ENCODE measurements at regions of chr16 and their contacts with region 1.

Region 1: GRCh38 chr16:56211435-56211981 is 20.2 kb downstream of the GNAO1 start:
- DNase-seq: peak; percentile 94
- H3K4me3 ChIP-seq: peak overlapping the region in 3 of 4 donors; percentile 0 to 28 (median 20)
- H3K27ac ChIP-seq: peak overlapping the region in 3 of 4 donors; percentile 72 to 86 (median 83)
- H3K4me1 ChIP-seq: peaks cover 0 to 73% (median 43%) of the 10 kb centered on the region in 4 donors
- H3K27me3 ChIP-seq: no peaks in the 10 kb centered on the region
- CTCF ChIP-seq: no peak
- EP300 ChIP-seq: peak; percentile 45 to 81 (median 78)
- POLR2A ChIP-seq: peak in 1 of 2 donors; percentile 26

Region 2: DNA sequence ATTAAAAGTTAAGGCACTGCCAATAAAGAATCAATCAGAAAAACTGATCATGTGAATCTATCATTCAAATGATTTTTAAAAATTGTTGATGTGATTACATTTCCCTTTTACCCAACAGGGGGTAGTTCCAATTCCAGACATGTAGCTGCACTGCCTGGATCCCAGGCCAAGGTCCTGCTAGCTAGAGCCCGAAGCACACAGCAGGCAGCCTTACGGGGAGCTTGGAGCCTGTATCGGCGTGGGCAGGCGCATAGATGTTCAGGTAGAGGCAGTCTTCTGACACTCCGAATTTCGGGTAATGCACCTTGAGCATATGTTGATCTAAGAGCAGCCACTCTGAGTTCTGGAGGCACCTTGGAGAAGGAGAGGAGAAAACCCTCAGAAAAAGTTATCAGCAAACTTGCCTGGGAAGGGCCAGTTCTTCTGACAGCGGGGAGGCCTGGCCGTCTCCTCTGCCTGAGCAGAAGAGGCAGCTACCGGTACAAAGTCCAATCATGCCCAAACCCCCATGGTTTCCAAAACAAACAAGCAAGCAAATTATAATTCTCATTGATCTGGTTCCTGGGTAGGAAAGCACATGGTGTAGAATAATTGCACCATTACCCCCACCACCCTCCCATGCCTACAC is 340.0 kb before region 1 on chr16:
- intact Hi-C with region 1: no loop called
- DNase-seq: no peak
- H3K4me3 ChIP-seq: no peak overlapping the region
- H3K27ac ChIP-seq: no peak overlapping the region
- H3K4me1 ChIP-seq: no peaks in the 10 kb centered on the region
- H3K27me3 ChIP-seq: no peaks in the 10 kb centered on the region
- CTCF ChIP-seq: no peak
- EP300 ChIP-seq: no peak
- POLR2A ChIP-seq: no peak

Region 3: DNA sequence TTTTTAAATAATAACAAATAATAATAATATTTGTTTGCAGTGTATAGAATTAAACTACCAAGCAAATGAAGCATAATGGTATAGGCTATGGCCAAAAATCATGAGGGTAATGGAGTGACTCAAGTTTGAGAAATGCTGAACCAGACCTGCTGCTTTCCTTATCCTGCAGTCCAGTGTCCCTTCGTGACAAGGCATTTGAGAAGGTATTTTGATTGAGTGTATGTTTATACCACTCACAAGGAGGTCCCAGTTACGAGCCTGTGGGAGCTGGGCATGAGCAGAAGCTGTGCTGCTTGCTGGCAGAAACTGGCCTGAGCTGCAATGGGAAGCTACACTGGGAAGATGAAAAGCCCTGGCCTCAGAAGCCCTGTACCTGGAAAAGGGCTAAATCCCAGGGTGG is 30.1 kb after region 1 on chr16:
- intact Hi-C with region 1: loop called (anchors 2 kb)
- DNase-seq: no peak
- H3K4me3 ChIP-seq: no peak overlapping the region
- H3K27ac ChIP-seq: peak overlapping the region in 3 of 4 donors; percentile 66 to 73 (median 69)
- H3K4me1 ChIP-seq: peaks cover 0 to 90% (median 62%) of the 10 kb centered on the region in 4 donors
- H3K27me3 ChIP-seq: no peaks in the 10 kb centered on the region
- CTCF ChIP-seq: no peak
- EP300 ChIP-seq: peak in 1 of 4 donors; percentile 67
- POLR2A ChIP-seq: no peak

Region 4: DNA sequence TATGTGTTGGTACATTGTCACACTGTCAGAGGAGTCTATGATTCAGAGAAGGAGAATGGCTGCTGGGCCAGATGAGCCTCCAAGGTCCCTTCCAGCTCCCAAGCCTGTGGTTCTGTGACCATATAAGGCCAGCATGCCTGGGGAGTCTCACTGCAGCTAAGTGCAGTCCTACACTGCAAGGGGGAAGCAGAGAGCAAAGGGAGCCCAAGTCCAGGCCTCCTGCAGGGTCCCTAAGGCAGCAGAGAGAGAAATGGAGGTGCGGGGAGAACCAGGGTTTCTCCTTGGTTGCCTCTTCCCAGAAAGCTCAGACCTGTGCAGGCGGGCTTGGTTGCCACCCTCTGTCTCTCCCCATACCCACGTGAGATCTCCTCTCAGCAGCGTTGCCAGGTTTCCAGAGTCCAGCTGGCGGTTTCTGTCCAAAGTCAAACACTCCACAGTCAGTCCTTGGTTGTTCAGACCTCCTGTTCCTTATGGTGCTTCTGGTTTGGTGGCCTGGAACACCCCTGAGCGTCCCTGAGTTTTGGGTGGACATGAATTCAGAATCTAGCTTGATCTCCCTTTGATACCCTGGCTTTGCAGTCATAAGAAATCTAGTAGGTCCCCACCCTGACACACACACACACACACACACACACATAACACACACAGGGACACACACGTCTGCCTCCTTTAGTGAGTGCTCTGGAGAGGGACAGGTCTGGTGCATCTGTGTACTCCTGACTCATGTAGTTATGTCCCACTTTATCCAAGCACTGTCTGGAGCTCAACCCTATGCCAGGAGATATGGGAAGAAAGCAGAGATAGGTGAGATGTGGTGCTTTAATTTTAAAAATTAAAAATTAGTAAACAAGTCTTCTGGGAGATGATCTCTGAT is 58.5 kb after region 1 on chr16:
- intact Hi-C with region 1: loop called (anchors 5 kb)
- DNase-seq: peak; percentile 93
- H3K4me3 ChIP-seq: peak overlapping the region in 2 of 4 donors; percentile 45 to 46
- H3K27ac ChIP-seq: peak overlapping the region in 3 of 4 donors; percentile 90 to 92 (median 91)
- H3K4me1 ChIP-seq: peaks cover 6 to 48% (median 45%) of the 10 kb centered on the region in 4 donors
- H3K27me3 ChIP-seq: no peaks in the 10 kb centered on the region
- CTCF ChIP-seq: peak in 3 of 4 experiments; percentile 19 to 56 (median 26)
- EP300 ChIP-seq: peak in 1 of 4 donors; percentile 9
- POLR2A ChIP-seq: no peak

Region 5: GRCh38 chr16:56576585-56577293 is 365.2 kb after region 1 on chr16:
- intact Hi-C with region 1: no loop called
- DNase-seq: peak; percentile 86
- H3K4me3 ChIP-seq: no peak overlapping the region
- H3K27ac ChIP-seq: no peak overlapping the region
- H3K4me1 ChIP-seq: no peaks in the 10 kb centered on the region
- H3K27me3 ChIP-seq: no peaks in the 10 kb centered on the region
- CTCF ChIP-seq: peak; percentile 62 to 75 (median 70)
- EP300 ChIP-seq: no peak
- POLR2A ChIP-seq: no peak